ENCODE measurements at regions of chr3 and their contacts with region 1.

Region 1: DNA sequence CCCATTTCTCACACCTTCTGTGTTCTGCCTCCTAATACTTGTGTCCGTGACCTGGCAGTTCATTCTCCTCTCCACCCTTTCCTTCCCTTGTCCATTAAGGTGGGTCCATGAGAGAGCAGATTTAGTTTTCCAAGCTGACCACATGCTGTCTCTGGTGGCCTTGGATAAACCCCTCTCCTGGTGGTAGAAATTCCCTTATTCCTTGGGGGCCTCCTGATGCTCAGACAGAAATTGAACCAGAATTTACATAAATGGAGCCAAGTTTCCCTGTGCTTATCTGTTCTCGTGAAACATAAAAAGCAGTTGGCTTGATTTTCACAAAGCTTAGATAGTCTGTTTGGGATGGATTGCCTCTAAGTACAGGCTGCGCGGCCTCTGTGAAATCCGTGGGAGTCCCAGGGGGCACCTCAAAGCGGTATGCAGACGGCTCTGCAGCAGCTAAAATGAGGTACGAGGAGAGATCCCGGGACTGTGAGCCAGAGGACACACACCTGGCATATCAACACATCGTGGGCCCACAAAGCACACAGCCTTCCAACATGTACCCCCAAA is 101.0 kb upstream of the NMNAT3 start:
- DNase-seq: no peak
- H3K4me3 ChIP-seq: no peak overlapping the region
- H3K27ac ChIP-seq: no peak overlapping the region
- H3K4me1 ChIP-seq: no peaks in the 10 kb centered on the region
- CTCF ChIP-seq: no peak

Region 2: GRCh38 chr3:139434764-139435307 is 343.9 kb before region 1 on chr3:
- CTCF ChIA-PET with region 1: no interaction called
- POLR2A ChIA-PET with region 1: no interaction called
- intact Hi-C with region 1: no loop called
- DNase-seq: no peak
- H3K4me3 ChIP-seq: no peak overlapping the region
- H3K27ac ChIP-seq: no peak overlapping the region
- H3K4me1 ChIP-seq: no peaks in the 10 kb centered on the region
- CTCF ChIP-seq: no peak

Region 3: GRCh38 chr3:139764936-139765335 is 13.8 kb before region 1 on chr3:
- CTCF ChIA-PET with region 1: no interaction called
- POLR2A ChIA-PET with region 1: no interaction called
- intact Hi-C with region 1: no loop called
- DNase-seq: no peak
- H3K4me3 ChIP-seq: no peak overlapping the region
- H3K27ac ChIP-seq: no peak overlapping the region
- H3K4me1 ChIP-seq: no peaks in the 10 kb centered on the region
- CTCF ChIP-seq: no peak

Region 4: DNA sequence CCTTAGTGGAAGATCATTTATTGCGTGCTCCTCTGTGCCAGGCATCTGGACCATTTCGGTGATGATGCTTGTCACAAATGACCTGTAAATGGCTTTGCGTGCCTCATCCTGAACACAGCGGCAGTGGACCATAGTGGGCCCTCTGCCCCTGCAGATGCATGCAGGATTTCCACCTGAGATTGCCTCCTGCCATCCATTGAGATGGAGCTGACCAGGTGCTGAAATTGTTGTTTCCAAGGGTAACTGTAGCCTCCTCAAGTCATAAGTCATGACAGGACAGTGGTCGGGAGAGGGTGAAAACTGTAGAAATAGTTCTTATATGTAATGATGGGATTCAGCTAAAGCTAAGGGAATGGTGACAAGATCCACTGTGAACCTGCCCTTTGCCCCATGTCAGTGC is 191.8 kb after region 1 on chr3:
- CTCF ChIA-PET with region 1: no interaction called
- POLR2A ChIA-PET with region 1: no interaction called
- intact Hi-C with region 1: no loop called
- DNase-seq: no peak
- H3K4me3 ChIP-seq: no peak overlapping the region
- H3K27ac ChIP-seq: no peak overlapping the region
- H3K4me1 ChIP-seq: no peaks in the 10 kb centered on the region
- CTCF ChIP-seq: no peak

Region 5: DNA sequence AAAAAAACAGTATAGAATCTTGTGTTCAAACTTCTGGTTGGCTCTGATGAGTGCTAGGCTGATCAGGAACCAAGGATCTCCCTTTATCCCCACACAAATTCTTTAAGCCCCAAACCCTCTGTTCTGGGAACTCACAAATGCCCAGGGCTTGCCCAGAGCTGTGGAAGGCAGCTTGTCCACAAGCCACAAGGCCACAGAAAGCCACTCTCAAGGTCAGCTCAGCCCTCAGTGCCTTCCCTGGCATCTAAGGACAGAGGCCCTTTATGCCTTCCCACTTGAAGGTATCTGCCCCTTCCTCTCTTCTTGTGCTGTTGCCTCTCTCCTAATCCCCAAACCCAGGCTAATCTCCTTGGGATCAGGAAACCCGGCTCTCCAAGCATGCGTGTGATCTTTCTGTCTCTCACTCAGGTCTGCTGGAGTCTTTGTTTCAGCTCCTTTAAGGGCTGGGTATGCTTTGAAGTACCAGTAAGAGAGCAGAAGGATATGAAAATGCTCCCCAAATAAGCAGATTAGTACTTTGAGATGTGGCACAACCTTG is 754.1 kb after region 1 on chr3:
- CTCF ChIA-PET with region 1: interaction called, 10 read pairs
- POLR2A ChIA-PET with region 1: no interaction called
- intact Hi-C with region 1: no loop called
- DNase-seq: no peak
- H3K4me3 ChIP-seq: no peak overlapping the region
- H3K27ac ChIP-seq: no peak overlapping the region
- H3K4me1 ChIP-seq: no peaks in the 10 kb centered on the region
- CTCF ChIP-seq: no peak

Measured in OCI-LY7 (cell line).